Sciatic nerve (tissue), 2 donors: ENCODE measurements at regions of chr6 and their contacts with region 1.

Region 1: DNA sequence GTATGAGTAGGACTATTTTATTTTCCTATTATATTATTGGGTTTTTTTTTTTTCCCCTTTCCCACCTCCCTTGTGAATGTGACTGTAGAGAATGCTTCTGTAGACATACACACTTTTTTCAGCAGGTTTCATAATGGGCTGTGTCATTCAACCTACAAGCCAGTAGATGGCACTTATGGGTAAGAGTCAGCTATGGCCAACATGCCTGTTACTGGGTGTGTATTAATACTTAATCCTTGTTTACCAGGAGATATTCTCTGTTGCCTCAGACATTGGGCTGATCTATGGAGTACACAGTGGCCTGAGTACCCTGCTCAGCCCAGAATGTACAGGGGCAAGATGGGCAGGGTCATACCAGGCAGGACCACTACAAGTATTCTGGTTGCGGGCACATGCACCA is 382.5 kb downstream of the EPHA7 start:
- DNase-seq: no peak
- ATAC-seq: no peak

Region 2: GRCh38 chr6:93079061-93079460 is 42.2 kb after region 1 on chr6:
- intact Hi-C with region 1: loop called (anchors 1 kb)
- DNase-seq: no peak
- ATAC-seq: no peak